ENCODE measurements at regions of chr15 and their contacts with region 1.

Region 1: GRCh38 chr15:42056934-42057779 is 36.3 kb upstream of the PLA2G4E start:
- DNase-seq: peak; percentile 82 to 91
- ATAC-seq: peak; percentile 90
- H3K4me3 ChIP-seq: no peak overlapping the region
- H3K27ac ChIP-seq: no peak overlapping the region
- H3K4me1 ChIP-seq: no peaks in the 10 kb centered on the region
- H3K27me3 ChIP-seq: no peaks in the 10 kb centered on the region

Region 2: GRCh38 chr15:41894791-41895463 is 162.2 kb before region 1 on chr15:
- intact Hi-C with region 1: loop called in 1 of 2 experiments (anchors 10 kb)
- DNase-seq: peak; percentile 91 to 92
- ATAC-seq: peak; percentile 88
- H3K4me3 ChIP-seq: no peak overlapping the region
- H3K27ac ChIP-seq: peak overlapping the region in 1 of 2 donors; percentile 38
- H3K4me1 ChIP-seq: no peaks in the 10 kb centered on the region
- H3K27me3 ChIP-seq: no peaks in the 10 kb centered on the region

Region 3: DNA sequence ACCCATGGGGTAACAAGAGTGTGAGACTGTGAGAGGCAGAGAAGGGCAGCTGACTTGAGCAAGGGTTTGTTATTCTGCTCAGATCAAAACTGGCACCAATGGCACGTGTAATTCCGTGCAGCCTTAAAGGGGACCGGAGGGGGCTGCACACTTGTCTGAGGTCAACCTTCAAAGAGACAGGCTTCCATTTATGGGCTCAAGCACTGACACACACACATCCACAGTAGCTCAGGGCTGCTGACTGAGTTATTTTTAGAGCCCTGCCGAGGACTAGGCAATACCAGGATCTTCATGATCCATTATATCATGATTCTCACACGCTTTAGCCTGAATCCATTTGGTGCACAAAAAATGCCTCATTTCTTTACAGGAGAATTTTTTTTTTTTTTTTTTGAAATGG is 142.7 kb before region 1 on chr15:
- intact Hi-C with region 1: no loop called
- DNase-seq: peak in 1 of 2 donors; percentile 19
- ATAC-seq: no peak
- H3K4me3 ChIP-seq: no peak overlapping the region
- H3K27ac ChIP-seq: no peak overlapping the region
- H3K4me1 ChIP-seq: peaks cover 0 to 2% of the 10 kb centered on the region in 2 donors
- H3K27me3 ChIP-seq: no peaks in the 10 kb centered on the region

Region 4: DNA sequence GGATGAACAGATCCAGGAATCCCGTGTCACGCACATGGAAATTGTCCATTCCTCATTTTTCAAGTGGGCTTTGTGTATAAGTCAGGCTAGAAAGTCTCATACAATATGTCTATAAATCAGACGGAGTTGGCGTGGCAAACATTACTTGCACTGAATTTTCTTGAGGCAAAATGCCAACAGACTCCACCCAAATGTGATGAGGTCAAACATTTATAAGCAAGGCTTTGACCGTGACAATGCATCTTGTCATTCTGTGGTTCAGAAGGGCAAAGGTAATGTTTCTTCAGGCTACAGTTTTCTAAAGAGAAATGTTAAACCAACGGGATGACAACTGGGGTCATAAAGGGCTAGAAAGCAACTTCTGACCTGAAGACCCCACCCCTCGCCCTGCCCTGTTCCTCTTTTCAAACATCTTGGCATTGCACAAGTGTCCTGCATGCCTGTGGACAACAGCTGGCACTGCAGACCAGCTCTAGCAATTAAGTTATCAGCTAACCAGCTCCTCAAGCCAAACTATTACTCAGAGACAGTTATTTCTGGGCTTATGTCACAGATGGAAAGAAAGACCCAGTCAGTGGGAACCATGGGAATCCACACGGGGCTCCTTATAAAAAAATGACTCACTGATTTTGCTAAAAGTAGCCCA is 126.8 kb before region 1 on chr15:
- intact Hi-C with region 1: loop called in 1 of 2 experiments (anchors 10 kb)
- DNase-seq: peak in 1 of 2 donors; percentile 82
- ATAC-seq: peak; percentile 86
- H3K4me3 ChIP-seq: no peak overlapping the region
- H3K27ac ChIP-seq: peak overlapping the region in 1 of 2 donors; percentile 70
- H3K4me1 ChIP-seq: peaks cover 4 to 5% of the 10 kb centered on the region in 2 donors
- H3K27me3 ChIP-seq: no peaks in the 10 kb centered on the region

Region 5: GRCh38 chr15:41989259-41989933 is 67.8 kb before region 1 on chr15:
- intact Hi-C with region 1: loop called (anchors 2 kb)
- DNase-seq: peak; percentile 86 to 95
- ATAC-seq: peak; percentile 87
- H3K4me3 ChIP-seq: no peak overlapping the region
- H3K27ac ChIP-seq: no peak overlapping the region
- H3K4me1 ChIP-seq: peaks cover 0 to 2% of the 10 kb centered on the region in 2 donors
- H3K27me3 ChIP-seq: no peaks in the 10 kb centered on the region